Cardiac septum (tissue), 1 donor: ENCODE measurements at regions of chr3 and their contacts with region 1.

Region 1: GRCh38 chr3:11719406-11720230 is 75.9 kb upstream of the VGLL4 start:
- DNase-seq: peak; percentile 87

Region 2: GRCh38 chr3:11452885-11453847 is 266.5 kb before region 1 on chr3:
- intact Hi-C with region 1: loop called (anchors 10 kb)
- DNase-seq: no peak